ENCODE measurements at regions of chr5 and their contacts with region 1.

Region 1: DNA sequence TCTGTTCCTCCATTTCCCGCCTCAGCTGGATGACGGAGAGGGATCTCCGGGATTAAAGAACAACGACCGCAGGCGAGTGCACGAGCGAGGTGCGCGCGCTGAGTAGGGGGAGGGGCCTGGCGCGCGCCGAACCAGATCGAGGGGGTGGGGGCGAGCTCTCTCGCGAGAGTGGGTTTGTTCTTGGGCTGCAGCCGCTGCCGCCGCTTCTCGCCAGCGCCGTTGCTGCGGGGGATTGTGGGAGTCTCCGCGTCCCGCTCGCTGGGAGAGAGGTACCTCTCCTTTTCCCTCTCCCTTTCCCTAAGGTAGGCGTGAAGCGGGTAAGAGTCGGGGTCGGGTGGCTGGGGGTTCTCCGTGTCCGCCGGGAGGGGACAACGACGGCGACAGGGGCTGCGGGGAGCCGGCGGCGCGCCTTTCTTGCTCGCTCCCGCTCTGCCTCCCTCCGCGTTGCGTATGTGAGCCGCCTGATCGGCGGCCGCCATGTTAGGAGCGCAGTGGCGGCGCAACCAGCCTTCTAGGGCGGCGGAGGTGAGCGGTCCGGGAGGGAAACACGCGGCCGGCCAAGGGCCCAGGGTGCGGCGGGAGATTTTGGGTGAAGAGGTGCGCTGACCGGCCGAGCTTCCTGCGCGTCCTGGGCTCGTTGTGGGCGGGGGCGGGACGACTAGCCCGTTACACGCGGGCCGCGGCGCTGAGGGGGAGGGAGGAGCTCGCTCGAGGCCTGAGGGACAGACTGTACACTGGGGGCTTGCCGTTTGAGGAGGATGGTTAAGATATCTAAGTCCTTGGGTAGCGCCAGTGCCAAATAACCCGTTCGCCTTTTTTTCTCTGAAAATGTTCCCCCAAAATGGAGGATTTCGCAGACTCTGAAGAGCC is at the start of gene MATR3:
- DNase-seq: peak; percentile 85 to 95 (median 92)
- ATAC-seq: peak; percentile 89 to 92 (median 92)
- H3K4me3 ChIP-seq: peak within 1 kb of the TSS; percentile 79 to 85
- H3K4me3 Mint-ChIP-seq: peak within 1 kb of the TSS; percentile 97
- H3K27ac ChIP-seq: peak within 1 kb of the TSS; percentile 99
- H3K27ac Mint-ChIP-seq: peak within 1 kb of the TSS; percentile 98
- H3K4me1 ChIP-seq: peaks cover 22 to 31% of the 10 kb centered on the region in 2 experiments
- H3K4me1 Mint-ChIP-seq: peaks cover 41 to 43% (median 41%) of the 10 kb centered on the region in 3 donors
- H3K27me3 ChIP-seq: no peaks in the 10 kb centered on the region
- H3K27me3 Mint-ChIP-seq: no peaks in the 10 kb centered on the region
- total RNA-seq, gene MATR3: 187 to 359 (median 200) TPM

Region 2: DNA sequence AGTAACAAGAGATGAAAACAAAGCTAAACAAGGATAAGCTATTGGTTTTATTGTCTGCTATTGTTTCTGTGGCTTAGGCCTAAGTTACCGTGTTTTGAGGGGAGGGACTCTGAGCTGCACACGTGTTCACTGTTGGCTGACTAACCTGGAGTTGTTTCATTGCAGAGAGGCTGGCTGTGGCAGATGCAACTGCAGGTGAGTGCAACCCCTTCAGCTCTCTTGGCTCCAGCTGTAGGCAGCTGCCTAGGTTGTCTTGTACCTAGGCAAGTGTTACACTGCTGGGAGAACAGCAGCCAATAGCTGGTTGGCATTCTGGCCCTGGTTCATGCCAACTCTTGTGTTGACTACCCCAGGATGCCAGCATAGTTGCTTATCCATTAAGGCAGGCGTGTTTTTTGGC is 17.8 kb before region 1 on chr5:
- CTCF ChIA-PET with region 1: interaction called in 1 of 2 experiments, 10 read pairs
- POLR2A ChIA-PET with region 1: interaction called, 4 to 9 read pairs
- DNase-seq: peak in 1 of 35 experiments; percentile 26
- ATAC-seq: no peak
- H3K4me3 ChIP-seq: no peak overlapping the region
- H3K4me3 Mint-ChIP-seq: peak overlapping the region; percentile 32 to 54 (median 52)
- H3K27ac ChIP-seq: no peak overlapping the region
- H3K27ac Mint-ChIP-seq: peak overlapping the region in 1 of 2 donors; percentile 62
- H3K4me1 ChIP-seq: peaks cover 16 to 45% of the 10 kb centered on the region in 2 experiments
- H3K4me1 Mint-ChIP-seq: peaks cover 27 to 54% (median 46%) of the 10 kb centered on the region in 3 donors
- H3K27me3 ChIP-seq: peaks cover 0 to 3% of the 10 kb centered on the region in 2 experiments
- H3K27me3 Mint-ChIP-seq: no peaks in the 10 kb centered on the region

Region 3: GRCh38 chr5:139306197-139306596 is 12.5 kb after region 1 on chr5:
- CTCF ChIA-PET with region 1: interaction called, 3 to 11 read pairs
- POLR2A ChIA-PET with region 1: interaction called, 6 to 30 read pairs
- DNase-seq: no peak
- ATAC-seq: peak in 2 of 4 experiments; percentile 18 to 44
- H3K4me3 ChIP-seq: no peak overlapping the region
- H3K4me3 Mint-ChIP-seq: peak overlapping the region in 2 of 3 donors; percentile 22 to 60
- H3K27ac ChIP-seq: peak overlapping the region; percentile 7
- H3K27ac Mint-ChIP-seq: peak overlapping the region; percentile 16 to 50
- H3K4me1 ChIP-seq: peaks cover 34 to 48% of the 10 kb centered on the region in 2 experiments
- H3K4me1 Mint-ChIP-seq: peaks cover 92 to 95% (median 94%) of the 10 kb centered on the region in 3 donors
- H3K27me3 ChIP-seq: no peaks in the 10 kb centered on the region
- H3K27me3 Mint-ChIP-seq: no peaks in the 10 kb centered on the region

Region 4: GRCh38 chr5:139312075-139312474 is 18.3 kb after region 1 on chr5:
- CTCF ChIA-PET with region 1: interaction called in 1 of 2 experiments, 11 read pairs
- POLR2A ChIA-PET with region 1: interaction called, 6 to 30 read pairs
- DNase-seq: no peak
- ATAC-seq: peak in 1 of 4 experiments; percentile 7
- H3K4me3 ChIP-seq: no peak overlapping the region
- H3K4me3 Mint-ChIP-seq: peak overlapping the region in 1 of 3 donors; percentile 25
- H3K27ac ChIP-seq: no peak overlapping the region
- H3K27ac Mint-ChIP-seq: no peak overlapping the region
- H3K4me1 ChIP-seq: peaks cover 17 to 25% of the 10 kb centered on the region in 2 experiments
- H3K4me1 Mint-ChIP-seq: peaks cover 66 to 78% (median 73%) of the 10 kb centered on the region in 3 donors
- H3K27me3 ChIP-seq: no peaks in the 10 kb centered on the region
- H3K27me3 Mint-ChIP-seq: no peaks in the 10 kb centered on the region

Region 5: GRCh38 chr5:139341650-139342422 is 48.1 kb after region 1 on chr5 and contains the start of gene PAIP2:
- CTCF ChIA-PET with region 1: interaction called in 1 of 2 experiments, 6 read pairs
- POLR2A ChIA-PET with region 1: interaction called, 4 to 12 read pairs
- DNase-seq: peak; percentile 94 to 100 (median 98)
- ATAC-seq: peak; percentile 85 to 93 (median 91)
- H3K4me3 ChIP-seq: peak within 1 kb of the TSS; percentile 99 to 100
- H3K4me3 Mint-ChIP-seq: peak within 1 kb of the TSS; percentile 98 to 100 (median 100)
- H3K27ac ChIP-seq: peak within 1 kb of the TSS; percentile 99
- H3K27ac Mint-ChIP-seq: peak within 1 kb of the TSS; percentile 99
- H3K4me1 ChIP-seq: peaks cover 23 to 38% of the 10 kb centered on the region in 2 experiments
- H3K4me1 Mint-ChIP-seq: peaks cover 54 to 61% (median 58%) of the 10 kb centered on the region in 3 donors
- H3K27me3 ChIP-seq: peaks cover 0 to 3% of the 10 kb centered on the region in 2 experiments
- H3K27me3 Mint-ChIP-seq: no peaks in the 10 kb centered on the region
- total RNA-seq, gene PAIP2: 96.5 to 119 (median 101) TPM

Region 6: GRCh38 chr5:139619861-139620260 is 326.1 kb after region 1 on chr5:
- CTCF ChIA-PET with region 1: no interaction called
- POLR2A ChIA-PET with region 1: no interaction called
- DNase-seq: no peak
- ATAC-seq: no peak
- H3K4me3 ChIP-seq: no peak overlapping the region
- H3K4me3 Mint-ChIP-seq: no peak overlapping the region
- H3K27ac ChIP-seq: no peak overlapping the region
- H3K27ac Mint-ChIP-seq: no peak overlapping the region
- H3K4me1 ChIP-seq: no peaks in the 10 kb centered on the region
- H3K4me1 Mint-ChIP-seq: peaks cover 0 to 4% (median 0%) of the 10 kb centered on the region in 3 donors
- H3K27me3 ChIP-seq: no peaks in the 10 kb centered on the region
- H3K27me3 Mint-ChIP-seq: no peaks in the 10 kb centered on the region